Calu3 (cell line): ENCODE measurements at regions of chr10 and their contacts with region 1.

Region 1: DNA sequence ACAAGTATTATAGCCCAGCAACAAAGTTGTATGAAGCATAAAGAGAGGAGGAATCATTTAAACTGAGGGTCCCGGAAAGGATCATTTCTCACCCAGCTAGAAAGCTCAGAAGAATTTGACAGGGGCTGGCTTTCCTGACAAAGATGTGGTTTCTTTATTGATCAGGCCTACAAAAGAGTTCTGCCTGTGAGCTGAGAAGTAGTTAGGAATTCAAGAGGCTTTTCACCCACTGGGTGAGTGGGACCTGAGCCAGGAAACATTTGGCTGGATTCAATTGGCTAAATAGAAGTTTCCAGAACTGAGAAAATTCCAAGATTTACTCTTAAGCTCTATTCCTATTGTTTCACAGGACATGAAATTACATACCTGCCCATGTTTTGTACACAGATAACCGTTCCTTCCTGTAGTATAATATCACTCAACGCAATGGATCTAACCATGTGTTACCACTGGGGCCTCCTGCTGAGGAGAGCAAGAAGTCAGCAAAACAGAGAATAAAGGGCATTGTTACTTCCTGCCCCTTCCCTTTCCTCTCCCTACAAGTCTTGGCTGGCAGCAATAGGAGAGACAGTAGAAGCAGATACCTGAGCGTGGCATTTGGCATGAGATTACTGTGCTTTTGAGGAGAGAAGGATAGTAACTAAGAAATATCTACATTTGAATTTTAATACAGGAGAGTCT is 53.9 kb upstream of the PAPSS2 start:
- DNase-seq: no peak
- H3K4me3 Mint-ChIP-seq: no peak overlapping the region
- H3K27ac Mint-ChIP-seq: no peak overlapping the region
- H3K4me1 Mint-ChIP-seq: peaks cover 26% of the 10 kb centered on the region
- H3K27me3 Mint-ChIP-seq: no peaks in the 10 kb centered on the region
- CTCF ChIP-seq: no peak

Region 2: DNA sequence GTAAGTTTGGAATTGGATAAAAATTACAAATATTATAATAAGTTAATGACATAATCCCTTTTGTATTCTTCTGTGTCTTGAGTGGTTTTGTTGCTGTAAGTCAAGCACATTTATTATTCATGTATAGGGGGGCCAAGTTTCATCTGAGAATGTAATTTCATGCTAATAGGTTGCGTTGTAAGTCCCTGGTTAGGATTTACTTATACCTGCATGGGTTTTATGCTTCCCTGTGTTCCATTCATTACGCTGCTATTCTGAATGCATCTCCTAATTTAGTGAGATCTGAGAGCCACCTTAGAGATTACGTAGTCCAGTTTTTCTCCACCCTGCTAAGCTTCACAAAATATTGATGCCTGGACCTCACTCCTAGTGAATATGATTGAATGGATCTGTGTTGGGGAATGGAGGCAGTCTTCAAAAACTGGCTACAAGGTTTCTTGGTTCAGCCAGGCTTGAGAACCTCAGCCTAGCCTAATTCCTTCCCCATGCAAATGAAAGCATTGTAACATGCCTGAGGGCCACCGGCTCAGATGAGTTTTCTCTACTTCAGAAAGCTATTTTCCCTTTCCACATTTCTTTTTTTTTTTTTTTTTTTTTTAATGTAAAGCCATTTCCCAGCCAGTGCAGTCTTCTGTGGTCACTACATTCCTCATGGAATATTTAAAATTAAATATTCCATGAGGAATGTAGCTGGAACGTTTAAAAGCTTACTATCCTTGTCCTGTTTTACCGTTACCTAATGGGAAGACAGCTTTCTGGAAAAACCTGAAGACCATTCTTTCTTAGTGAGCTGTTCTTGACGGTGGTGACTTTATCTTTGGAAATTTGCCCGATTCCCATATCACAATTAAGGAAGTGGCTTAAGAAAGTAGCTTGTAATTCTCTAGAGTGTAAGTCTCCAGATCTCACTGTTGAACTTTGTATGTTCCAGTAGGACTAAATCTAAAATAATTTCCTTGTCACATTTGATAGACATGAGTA is 69.9 kb after region 1 on chr10:
- CTCF ChIA-PET with region 1: interaction called, 11 read pairs
- intact Hi-C with region 1: no loop called
- DNase-seq: no peak
- H3K4me3 Mint-ChIP-seq: no peak overlapping the region
- H3K27ac Mint-ChIP-seq: no peak overlapping the region
- H3K4me1 Mint-ChIP-seq: no peaks in the 10 kb centered on the region
- H3K27me3 Mint-ChIP-seq: no peaks in the 10 kb centered on the region
- CTCF ChIP-seq: no peak